Psoas muscle (tissue), 8 donors: ENCODE measurements at regions of chr14 and their contacts with region 1.

Region 1: GRCh38 chr14:93115069-93115820 is 480 bp downstream of the ITPK1 start:
- DNase-seq: peak; percentile 90 to 93
- ATAC-seq: peak; percentile 89 to 95 (median 92)
- H3K4me3 ChIP-seq: peak overlapping the region; percentile 93
- H3K27ac ChIP-seq: peak overlapping the region; percentile 89
- H3K4me1 ChIP-seq: peaks cover 19% of the 10 kb centered on the region
- H3K27me3 ChIP-seq: no peaks in the 10 kb centered on the region
- CTCF ChIP-seq: no peak

Region 2: GRCh38 chr14:93042968-93043940 is 72.0 kb before region 1 on chr14:
- intact Hi-C with region 1: no loop called
- DNase-seq: peak in 1 of 2 donors; percentile 53
- ATAC-seq: peak; percentile 30 to 83 (median 73)
- H3K4me3 ChIP-seq: no peak overlapping the region
- H3K27ac ChIP-seq: no peak overlapping the region
- H3K4me1 ChIP-seq: peaks cover 35% of the 10 kb centered on the region
- H3K27me3 ChIP-seq: no peaks in the 10 kb centered on the region
- CTCF ChIP-seq: no peak

Region 3: DNA sequence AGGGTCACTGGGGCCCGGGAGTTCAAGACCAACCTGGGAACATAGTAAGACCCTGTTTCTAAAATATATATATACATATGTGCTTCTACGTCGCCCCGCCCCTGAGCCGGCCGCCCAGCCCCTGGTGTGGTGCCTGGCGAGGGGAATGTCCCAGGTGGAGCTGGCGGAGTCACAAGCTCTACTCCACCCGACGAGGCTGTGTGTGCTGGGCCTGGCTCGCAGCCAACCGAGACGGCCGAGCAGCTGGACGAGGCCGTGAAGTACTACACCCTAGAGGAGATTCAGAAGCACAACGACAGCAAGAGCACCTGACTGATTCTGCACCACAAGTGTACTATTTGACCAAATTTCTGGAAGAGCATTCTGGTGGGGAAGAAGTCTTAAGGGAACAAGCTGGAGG is 22.6 kb after region 1 on chr14:
- intact Hi-C with region 1: loop called (anchors 2 kb)
- DNase-seq: peak; percentile 28 to 65
- ATAC-seq: peak in 3 of 4 donors; percentile 40 to 64 (median 52)
- H3K4me3 ChIP-seq: no peak overlapping the region
- H3K27ac ChIP-seq: no peak overlapping the region
- H3K4me1 ChIP-seq: no peaks in the 10 kb centered on the region
- H3K27me3 ChIP-seq: no peaks in the 10 kb centered on the region
- CTCF ChIP-seq: no peak

Region 4: DNA sequence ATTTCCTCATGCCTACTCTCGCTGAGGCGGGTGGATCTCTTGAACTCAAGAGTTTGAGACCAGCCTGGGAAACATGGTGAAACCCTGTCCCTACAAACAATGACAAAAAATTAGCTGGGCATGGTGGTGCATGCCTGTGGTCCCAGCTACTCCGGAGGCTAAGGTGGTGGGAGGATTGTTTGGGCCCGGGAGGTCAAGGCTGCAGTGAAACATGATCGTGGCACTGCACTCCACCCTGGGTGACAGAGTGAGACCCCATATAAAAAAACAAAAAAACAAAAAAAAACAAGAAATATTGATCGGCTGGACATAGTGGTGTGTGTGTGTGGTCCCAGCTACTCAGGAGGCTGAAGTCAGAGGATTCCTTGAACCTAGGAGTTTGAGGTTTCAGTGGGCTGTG is 60.2 kb after region 1 on chr14:
- intact Hi-C with region 1: loop called (anchors 5 kb)
- DNase-seq: no peak
- ATAC-seq: no peak
- H3K4me3 ChIP-seq: no peak overlapping the region
- H3K27ac ChIP-seq: no peak overlapping the region
- H3K4me1 ChIP-seq: no peaks in the 10 kb centered on the region
- H3K27me3 ChIP-seq: peaks cover 0 to 11% (median 0%) of the 10 kb centered on the region in 3 donors
- CTCF ChIP-seq: no peak

Region 5: DNA sequence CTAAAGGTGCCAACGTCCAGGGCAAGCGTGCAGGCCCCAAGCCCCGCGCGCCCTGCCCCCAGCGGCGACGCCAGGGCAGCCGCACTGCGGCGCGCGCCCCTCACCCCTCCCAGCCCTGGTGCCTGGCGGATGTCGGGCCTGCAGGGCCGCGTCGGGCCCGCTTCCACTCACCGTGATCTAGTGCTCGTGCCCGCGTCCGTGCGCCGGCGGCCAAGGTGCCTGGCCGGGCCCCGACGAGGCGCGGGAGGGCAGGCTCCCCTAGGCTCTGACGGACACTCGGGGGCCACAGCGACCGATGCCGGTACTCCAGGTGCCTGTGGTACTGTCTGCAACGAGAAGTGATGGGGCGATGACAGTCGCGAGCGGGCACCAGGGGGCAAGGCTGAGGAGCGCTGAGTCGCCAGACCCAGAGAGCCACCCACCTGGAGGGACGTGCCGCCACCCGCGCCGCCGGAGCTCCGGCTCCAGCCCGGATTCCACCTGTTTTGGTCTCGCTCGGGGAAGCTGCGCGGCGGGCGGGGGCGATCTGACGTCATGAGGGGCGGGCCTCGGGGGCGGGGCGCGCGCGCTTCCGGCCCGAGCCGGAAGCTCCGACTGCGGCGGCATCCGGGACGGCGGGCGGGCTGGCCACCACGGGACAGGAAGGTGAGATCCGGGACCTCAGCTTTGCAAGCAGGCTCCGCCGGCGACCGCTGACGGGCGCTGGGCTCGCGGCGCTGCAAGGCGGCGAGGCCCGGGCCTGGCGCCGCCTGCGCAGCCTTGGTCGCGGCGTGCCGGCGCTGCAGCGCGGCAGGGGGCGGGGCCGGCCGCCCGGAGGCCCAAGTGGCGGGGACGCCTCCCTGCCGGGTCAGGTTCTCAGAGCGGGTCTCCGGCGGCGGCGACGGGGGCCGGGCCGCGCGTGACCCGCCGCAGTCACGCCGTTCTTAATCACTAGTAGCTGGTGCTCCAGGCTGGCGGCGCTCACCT is 69.4 kb after region 1 on chr14 and contains the starts of genes LYSET and MOAP1:
- intact Hi-C with region 1: loop called (anchors 5 kb)
- DNase-seq: peak; percentile 88 to 94
- ATAC-seq: peak; percentile 95 to 96 (median 95)
- H3K4me3 ChIP-seq: peak within 1 kb of the TSS; percentile 89
- H3K27ac ChIP-seq: peak within 1 kb of the TSS; percentile 92
- H3K4me1 ChIP-seq: peaks cover 19% of the 10 kb centered on the region
- H3K27me3 ChIP-seq: no peaks in the 10 kb centered on the region
- CTCF ChIP-seq: no peak
- total RNA-seq, gene LYSET: 19.7 to 30.1 (median 24.4) TPM
- total RNA-seq, gene MOAP1: 28.4 to 49.2 (median 35.1) TPM

Region 6: GRCh38 chr14:93219103-93219726 is 104.0 kb after region 1 on chr14:
- intact Hi-C with region 1: loop called in 1 of 2 experiments (anchors 5 kb)
- DNase-seq: no peak
- ATAC-seq: peak in 2 of 4 donors; percentile 79 to 85
- H3K4me3 ChIP-seq: no peak overlapping the region
- H3K27ac ChIP-seq: no peak overlapping the region
- H3K4me1 ChIP-seq: no peaks in the 10 kb centered on the region
- H3K27me3 ChIP-seq: no peaks in the 10 kb centered on the region
- CTCF ChIP-seq: peak; percentile 46

Region 7: GRCh38 chr14:93332853-93333630 is 217.8 kb after region 1 on chr14 and contains the start of gene BTBD7:
- intact Hi-C with region 1: loop called in 1 of 2 experiments (anchors 10 kb)
- DNase-seq: peak; percentile 97 to 98
- ATAC-seq: peak; percentile 98 to 99 (median 99)
- H3K4me3 ChIP-seq: peak within 1 kb of the TSS; percentile 95
- H3K27ac ChIP-seq: peak within 1 kb of the TSS; percentile 97
- H3K4me1 ChIP-seq: peaks cover 27% of the 10 kb centered on the region
- H3K27me3 ChIP-seq: no peaks in the 10 kb centered on the region
- CTCF ChIP-seq: peak; percentile 18
- total RNA-seq, gene BTBD7: 18.9 to 24.9 (median 22.6) TPM